GM18951 (cell line): ENCODE measurements at regions of chr11 and their contacts with region 1.

Region 1: GRCh38 chr11:12052676-12053605 is 44.5 kb upstream of the DKK3 start:
- POLR2A ChIP-seq: no peak

Region 2: GRCh38 chr11:11798586-11799438 is 254.1 kb before region 1 on chr11:
- in situ Hi-C with region 1: loop called (anchors 5 kb)
- POLR2A ChIP-seq: no peak

Region 3: DNA sequence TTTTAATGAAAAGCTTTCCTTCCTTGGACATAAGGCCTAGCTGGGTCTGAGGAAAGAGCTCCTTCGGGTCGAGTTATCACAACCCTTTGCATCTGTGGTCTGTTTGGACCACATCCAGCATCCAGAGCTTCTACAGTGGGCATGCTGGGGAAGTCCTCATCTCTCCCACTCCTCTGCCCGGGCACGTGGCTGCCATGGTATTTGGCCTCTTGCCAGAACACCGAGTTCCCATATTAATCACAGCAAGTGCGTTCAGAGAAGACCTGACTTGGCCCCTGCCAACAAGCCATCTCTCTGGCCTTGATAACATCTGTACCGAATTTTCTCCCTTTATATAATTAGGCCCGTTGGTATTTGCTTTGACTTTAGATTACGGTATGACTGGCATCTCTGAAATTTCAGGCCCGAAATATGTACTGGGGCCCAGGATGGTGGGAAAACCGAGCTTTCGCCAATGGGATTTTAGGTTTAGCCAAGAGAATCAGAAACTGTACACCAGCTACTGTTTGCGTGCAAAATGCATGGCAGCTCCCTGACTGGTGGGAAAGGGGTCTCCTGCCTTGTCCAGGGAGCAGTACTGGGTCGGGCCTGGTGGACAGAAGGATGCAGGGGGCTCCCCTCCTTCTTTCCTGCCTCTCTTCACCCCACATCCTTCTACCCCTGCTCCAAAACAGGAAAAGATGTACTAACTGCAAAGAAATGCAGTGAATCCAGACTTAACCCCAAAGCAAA is 147.5 kb after region 1 on chr11:
- in situ Hi-C with region 1: no loop called
- POLR2A ChIP-seq: no peak

Region 4: GRCh38 chr11:12235947-12236743 is 183.2 kb after region 1 on chr11:
- in situ Hi-C with region 1: loop called (anchors 5 kb)
- POLR2A ChIP-seq: no peak

Region 5: GRCh38 chr11:12281571-12282478 is 228.9 kb after region 1 on chr11:
- in situ Hi-C with region 1: loop called (anchors 5 kb)
- POLR2A ChIP-seq: no peak